CD8-positive, alpha-beta T cell (primary cell): ENCODE measurements at regions of chr6 and their contacts with region 1.

Region 1: DNA sequence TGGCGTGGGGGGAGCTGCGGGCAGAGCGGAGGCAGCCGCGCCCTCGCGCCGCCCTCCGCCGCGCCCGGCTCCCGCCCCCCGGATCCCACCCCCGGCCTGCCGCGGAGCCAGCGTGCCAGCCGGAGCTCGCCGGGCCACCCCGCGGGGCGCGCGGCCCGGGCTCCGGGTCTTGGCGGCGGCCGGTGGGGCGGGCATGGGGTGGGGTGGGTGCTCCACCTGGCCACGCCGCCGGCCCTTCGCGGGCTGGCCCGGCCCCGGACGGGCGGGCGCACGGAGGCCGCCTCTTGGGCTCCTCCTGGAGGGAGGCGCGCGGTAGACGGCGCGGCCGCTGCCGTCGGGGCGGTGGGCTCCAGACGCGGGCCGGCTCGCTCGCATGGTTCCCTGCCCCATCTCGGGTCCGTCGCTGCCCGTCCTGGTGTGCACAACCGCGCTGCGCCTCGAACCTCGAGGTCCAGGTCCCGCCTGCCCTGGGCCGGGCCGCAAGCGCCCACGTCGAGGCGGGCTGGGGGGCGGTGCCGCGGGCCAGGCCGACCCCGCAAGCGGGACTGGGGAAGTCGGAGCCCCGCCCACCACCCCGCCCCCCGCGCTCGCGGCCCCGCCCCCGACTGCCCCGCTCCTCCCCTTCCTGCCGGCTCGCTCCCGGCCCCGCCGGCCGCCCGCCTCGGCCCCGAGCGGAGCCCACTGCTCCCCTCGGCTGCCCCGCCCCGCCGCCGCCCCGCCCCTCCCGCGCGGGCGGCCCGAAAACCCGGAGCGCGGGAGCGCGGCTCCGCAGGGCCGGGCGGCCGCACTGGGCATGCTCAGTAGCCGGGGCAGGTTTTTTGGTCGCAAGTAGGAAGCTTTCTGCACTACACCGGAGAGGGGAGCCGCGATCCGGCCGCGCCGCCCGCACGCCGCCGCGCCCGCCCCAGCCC is at the start of gene CDYL:
- DNase-seq: peak; percentile 76 to 94 (median 89)
- ATAC-seq: peak; percentile 75
- H3K4me3 ChIP-seq: peak within 1 kb of the TSS; percentile 63 to 64
- H3K4me3 Mint-ChIP-seq: peak within 1 kb of the TSS; percentile 91
- H3K27ac ChIP-seq: peak within 1 kb of the TSS; percentile 29 to 38
- H3K27ac Mint-ChIP-seq: peak within 1 kb of the TSS; percentile 91
- H3K4me1 ChIP-seq: peaks cover 25% of the 10 kb centered on the region
- H3K4me1 Mint-ChIP-seq: peaks cover 44% of the 10 kb centered on the region
- H3K27me3 ChIP-seq: no peaks in the 10 kb centered on the region
- H3K27me3 Mint-ChIP-seq: no peaks in the 10 kb centered on the region
- CTCF ChIP-seq: no peak
- total RNA-seq, gene CDYL: 35.9 to 36.3 TPM

Region 2: GRCh38 chr6:2940010-2940850 is 1835.6 kb before region 1 on chr6:
- CTCF ChIA-PET with region 1: no interaction called
- POLR2A ChIA-PET with region 1: no interaction called
- intact Hi-C with region 1: loop called in 1 of 2 experiments (anchors 5 kb)
- DNase-seq: peak; percentile 52 to 91 (median 73)
- ATAC-seq: peak; percentile 70
- H3K4me3 ChIP-seq: peak overlapping the region; percentile 52 to 75
- H3K4me3 Mint-ChIP-seq: peak overlapping the region; percentile 84
- H3K27ac ChIP-seq: peak overlapping the region; percentile 73 to 84
- H3K27ac Mint-ChIP-seq: peak overlapping the region; percentile 94
- H3K4me1 ChIP-seq: peaks cover 87% of the 10 kb centered on the region
- H3K4me1 Mint-ChIP-seq: peaks cover 80% of the 10 kb centered on the region
- H3K27me3 ChIP-seq: no peaks in the 10 kb centered on the region
- H3K27me3 Mint-ChIP-seq: no peaks in the 10 kb centered on the region
- CTCF ChIP-seq: no peak

Region 3: GRCh38 chr6:4612636-4613171 is 163.1 kb before region 1 on chr6:
- CTCF ChIA-PET with region 1: no interaction called
- POLR2A ChIA-PET with region 1: no interaction called
- intact Hi-C with region 1: no loop called
- DNase-seq: no peak
- ATAC-seq: no peak
- H3K4me3 ChIP-seq: no peak overlapping the region
- H3K4me3 Mint-ChIP-seq: no peak overlapping the region
- H3K27ac ChIP-seq: no peak overlapping the region
- H3K27ac Mint-ChIP-seq: no peak overlapping the region
- H3K4me1 ChIP-seq: peaks cover 11% of the 10 kb centered on the region
- H3K4me1 Mint-ChIP-seq: peaks cover 19% of the 10 kb centered on the region
- H3K27me3 ChIP-seq: no peaks in the 10 kb centered on the region
- H3K27me3 Mint-ChIP-seq: peaks cover 9% of the 10 kb centered on the region
- CTCF ChIP-seq: no peak

Region 4: DNA sequence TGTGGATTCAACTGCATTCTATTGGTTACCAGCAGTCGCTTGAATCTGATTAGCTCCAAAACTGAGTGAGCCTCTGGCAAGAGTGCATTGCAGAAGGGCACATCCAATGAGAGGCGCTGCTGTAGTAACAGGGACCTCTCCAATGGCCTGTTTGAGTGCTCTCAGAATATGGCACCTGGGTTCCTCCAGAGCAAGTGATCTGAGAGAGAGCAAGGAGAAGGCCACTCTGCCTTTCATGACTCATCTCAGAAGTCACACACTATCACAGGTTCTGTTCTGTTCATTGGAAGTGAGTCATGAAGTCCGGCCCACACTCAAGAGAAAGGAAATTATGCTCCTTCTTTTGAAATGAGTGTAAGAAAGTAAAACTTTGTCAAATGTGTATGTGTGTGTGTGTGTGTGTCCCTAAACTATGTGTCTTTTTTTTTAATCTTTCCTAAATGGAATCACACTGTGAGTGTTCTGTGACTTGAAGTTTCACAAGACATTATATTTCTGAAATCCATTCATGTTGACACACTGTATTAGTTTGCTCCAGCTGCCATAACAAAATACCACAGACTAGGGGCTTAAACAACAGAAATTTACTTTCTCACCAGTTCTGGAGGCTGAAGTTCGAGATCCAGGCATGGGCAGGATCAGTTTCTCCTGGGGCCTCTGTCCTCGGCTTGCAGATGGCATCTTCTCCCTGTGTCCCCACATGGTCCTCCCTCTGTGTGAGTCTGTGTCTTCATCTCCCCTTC is 138.0 kb before region 1 on chr6:
- CTCF ChIA-PET with region 1: no interaction called
- POLR2A ChIA-PET with region 1: no interaction called
- intact Hi-C with region 1: no loop called
- DNase-seq: no peak
- ATAC-seq: no peak
- H3K4me3 ChIP-seq: no peak overlapping the region
- H3K4me3 Mint-ChIP-seq: no peak overlapping the region
- H3K27ac ChIP-seq: no peak overlapping the region
- H3K27ac Mint-ChIP-seq: no peak overlapping the region
- H3K4me1 ChIP-seq: no peaks in the 10 kb centered on the region
- H3K4me1 Mint-ChIP-seq: no peaks in the 10 kb centered on the region
- H3K27me3 ChIP-seq: no peaks in the 10 kb centered on the region
- H3K27me3 Mint-ChIP-seq: peaks cover 18% of the 10 kb centered on the region
- CTCF ChIP-seq: no peak

Region 5: DNA sequence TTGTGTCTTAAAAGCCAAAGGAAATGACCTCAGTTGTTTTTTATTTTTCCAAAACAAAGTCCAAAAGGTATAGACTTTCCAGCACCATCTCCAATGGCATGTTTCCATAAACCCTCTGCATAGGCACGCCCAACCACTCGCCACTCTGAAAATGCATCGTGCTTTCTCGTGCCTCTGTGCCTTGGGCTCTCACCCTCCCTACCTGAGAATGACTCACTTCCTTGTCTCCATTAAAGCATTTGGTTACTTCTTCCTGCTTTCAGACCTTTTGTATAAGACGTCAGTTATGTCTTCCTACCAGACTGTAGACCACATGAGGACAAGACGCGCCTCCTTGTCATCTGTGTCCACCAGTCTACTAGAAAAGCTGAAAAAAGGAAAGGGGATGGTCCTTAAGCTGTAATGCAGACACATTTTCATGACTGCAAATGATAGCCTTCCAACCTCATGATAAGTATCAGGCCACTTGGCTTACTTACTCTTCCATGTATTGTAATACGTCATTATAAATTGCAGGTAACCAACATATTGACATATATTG is 60.8 kb before region 1 on chr6:
- CTCF ChIA-PET with region 1: no interaction called
- POLR2A ChIA-PET with region 1: no interaction called
- intact Hi-C with region 1: no loop called
- DNase-seq: no peak
- ATAC-seq: no peak
- H3K4me3 ChIP-seq: no peak overlapping the region
- H3K4me3 Mint-ChIP-seq: no peak overlapping the region
- H3K27ac ChIP-seq: no peak overlapping the region
- H3K27ac Mint-ChIP-seq: no peak overlapping the region
- H3K4me1 ChIP-seq: no peaks in the 10 kb centered on the region
- H3K4me1 Mint-ChIP-seq: no peaks in the 10 kb centered on the region
- H3K27me3 ChIP-seq: peaks cover 0 to 3% of the 10 kb centered on the region in 2 experiments
- H3K27me3 Mint-ChIP-seq: no peaks in the 10 kb centered on the region
- CTCF ChIP-seq: no peak

Region 6: DNA sequence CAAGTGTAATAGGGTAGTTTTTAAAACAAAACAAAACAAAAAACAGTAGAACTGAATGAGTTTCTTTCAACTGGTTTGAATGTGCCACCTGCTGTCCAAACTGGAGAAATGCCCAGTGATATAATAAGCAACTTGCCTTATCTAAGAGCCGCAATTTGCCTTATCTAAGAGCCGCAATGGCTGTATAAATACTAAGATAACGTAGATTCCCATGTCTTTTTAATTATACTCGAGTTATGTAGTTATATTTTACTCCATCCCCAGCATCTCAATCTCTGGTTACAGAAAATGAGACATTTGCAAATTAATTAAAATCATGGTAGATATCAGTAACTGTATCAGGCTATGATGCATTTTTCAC is 160.8 kb after region 1 on chr6:
- CTCF ChIA-PET with region 1: no interaction called
- POLR2A ChIA-PET with region 1: no interaction called
- intact Hi-C with region 1: loop called in 1 of 2 experiments (anchors 5 kb)
- DNase-seq: peak in 2 of 9 experiments; percentile 43 to 61
- ATAC-seq: no peak
- H3K4me3 ChIP-seq: no peak overlapping the region
- H3K4me3 Mint-ChIP-seq: no peak overlapping the region
- H3K27ac ChIP-seq: no peak overlapping the region
- H3K27ac Mint-ChIP-seq: no peak overlapping the region
- H3K4me1 ChIP-seq: peaks cover 22% of the 10 kb centered on the region
- H3K4me1 Mint-ChIP-seq: peaks cover 57% of the 10 kb centered on the region
- H3K27me3 ChIP-seq: no peaks in the 10 kb centered on the region
- H3K27me3 Mint-ChIP-seq: no peaks in the 10 kb centered on the region
- CTCF ChIP-seq: peak; percentile 59

Region 7: GRCh38 chr6:4997862-4998261 is 222.0 kb after region 1 on chr6:
- CTCF ChIA-PET with region 1: no interaction called
- POLR2A ChIA-PET with region 1: interaction called, 4 read pairs
- intact Hi-C with region 1: loop called (anchors 2 kb)
- DNase-seq: no peak
- ATAC-seq: no peak
- H3K4me3 ChIP-seq: no peak overlapping the region
- H3K4me3 Mint-ChIP-seq: no peak overlapping the region
- H3K27ac ChIP-seq: no peak overlapping the region
- H3K27ac Mint-ChIP-seq: no peak overlapping the region
- H3K4me1 ChIP-seq: no peaks in the 10 kb centered on the region
- H3K4me1 Mint-ChIP-seq: peaks cover 2% of the 10 kb centered on the region
- H3K27me3 ChIP-seq: no peaks in the 10 kb centered on the region
- H3K27me3 Mint-ChIP-seq: no peaks in the 10 kb centered on the region
- CTCF ChIP-seq: no peak

Region 8: DNA sequence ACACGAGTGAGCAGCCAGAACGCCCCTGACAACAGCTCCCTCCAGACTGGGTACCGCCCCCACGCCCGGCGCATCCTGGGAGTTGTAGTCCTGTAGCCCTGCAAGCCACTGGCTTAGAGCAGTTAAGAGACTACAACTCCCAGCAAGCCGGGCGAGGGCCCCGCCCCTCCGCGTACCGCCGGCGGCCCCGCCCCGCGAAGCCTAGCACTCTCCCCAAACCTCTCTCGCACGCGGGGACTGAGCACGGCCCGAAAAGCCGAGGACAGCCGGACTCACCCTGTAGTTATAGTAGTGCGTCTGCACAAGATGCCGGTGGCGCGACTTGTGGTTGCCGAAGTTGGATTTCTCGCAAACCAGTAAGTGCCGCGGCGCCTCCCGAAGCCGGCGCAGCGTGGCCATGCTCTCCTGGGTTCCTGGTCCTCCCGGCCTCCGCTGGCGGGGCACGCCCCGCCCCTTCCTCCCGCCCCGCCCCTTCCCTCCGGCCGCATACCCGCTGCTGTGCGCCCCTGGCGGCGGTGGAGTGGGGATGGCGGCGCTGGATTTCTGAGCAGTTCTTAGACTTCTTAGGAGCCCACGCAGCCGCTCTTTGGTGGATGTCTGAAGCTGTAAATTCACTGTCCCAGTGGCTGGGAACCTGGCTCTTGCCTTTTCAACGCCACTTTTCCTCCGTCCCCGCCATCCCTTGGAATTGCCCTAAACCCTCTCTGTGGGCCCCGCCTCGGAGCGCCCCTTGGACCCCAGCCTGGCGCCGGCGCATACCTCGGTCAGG is 227.9 kb after region 1 on chr6 and contains the start of gene RPP40:
- CTCF ChIA-PET with region 1: no interaction called
- POLR2A ChIA-PET with region 1: interaction called, 4 read pairs
- intact Hi-C with region 1: loop called (anchors 1 to 2 kb)
- DNase-seq: peak; percentile 97 to 99 (median 98)
- ATAC-seq: peak; percentile 94
- H3K4me3 ChIP-seq: peak within 1 kb of the TSS; percentile 80 to 95
- H3K4me3 Mint-ChIP-seq: peak within 1 kb of the TSS; percentile 94
- H3K27ac ChIP-seq: peak within 1 kb of the TSS; percentile 79 to 82
- H3K27ac Mint-ChIP-seq: peak within 1 kb of the TSS; percentile 97
- H3K4me1 ChIP-seq: peaks cover 8% of the 10 kb centered on the region
- H3K4me1 Mint-ChIP-seq: peaks cover 13% of the 10 kb centered on the region
- H3K27me3 ChIP-seq: no peaks in the 10 kb centered on the region
- H3K27me3 Mint-ChIP-seq: no peaks in the 10 kb centered on the region
- CTCF ChIP-seq: peak; percentile 84
- total RNA-seq, gene RPP40: 0.94 to 1.2 TPM

Region 9: DNA sequence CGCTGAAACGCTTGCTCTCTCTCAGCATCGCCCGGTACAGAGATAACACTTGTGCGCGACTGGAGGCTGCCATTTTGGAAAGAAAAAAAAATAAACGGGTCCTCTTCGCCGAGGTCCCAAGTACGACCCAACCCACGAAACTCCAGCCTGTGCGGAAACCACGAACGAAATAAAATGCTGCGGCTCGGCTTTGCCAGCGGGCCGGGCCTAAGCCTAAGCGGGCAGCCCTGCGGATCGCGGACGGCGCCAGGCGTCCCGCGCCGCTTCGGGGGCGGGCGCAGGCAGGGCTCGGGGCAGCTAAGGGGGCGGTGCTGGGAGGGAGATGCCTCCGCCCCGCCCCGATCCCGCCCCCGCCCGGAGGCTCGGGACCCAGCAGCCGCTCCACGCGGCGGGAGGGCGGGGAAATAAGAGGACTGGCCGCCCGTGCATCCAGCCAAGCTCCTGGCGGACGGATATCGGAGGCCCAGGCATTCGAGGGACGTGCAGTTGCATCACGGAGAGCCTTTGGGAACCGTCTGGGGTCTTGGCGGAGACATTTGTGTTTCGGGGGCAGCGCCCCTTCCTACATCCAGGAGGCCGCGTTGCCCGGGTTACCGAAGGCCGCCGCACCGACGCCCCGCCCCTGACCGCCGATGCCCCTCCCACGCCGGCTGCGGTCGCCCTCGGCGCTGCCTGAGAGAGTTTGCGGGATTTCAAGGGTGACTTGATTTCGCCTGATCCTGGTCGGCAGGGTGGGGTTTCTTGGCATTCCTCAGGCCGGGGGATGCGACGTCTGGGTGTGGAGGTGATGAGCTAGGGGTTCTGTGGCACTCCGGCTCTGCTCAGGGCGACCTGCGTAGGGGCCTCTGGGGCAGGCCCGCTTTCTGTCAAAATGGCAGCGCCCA is 485.1 kb after region 1 on chr6 and contains the starts of genes FARS2 and LYRM4:
- CTCF ChIA-PET with region 1: no interaction called
- POLR2A ChIA-PET with region 1: no interaction called
- intact Hi-C with region 1: loop called in 1 of 2 experiments (anchors 5 kb)
- DNase-seq: peak; percentile 86 to 98 (median 92)
- ATAC-seq: peak; percentile 82
- H3K4me3 ChIP-seq: peak within 1 kb of the TSS; percentile 93
- H3K4me3 Mint-ChIP-seq: peak within 1 kb of the TSS; percentile 98
- H3K27ac ChIP-seq: peak within 1 kb of the TSS; percentile 97 to 99
- H3K27ac Mint-ChIP-seq: peak within 1 kb of the TSS; percentile 100
- H3K4me1 ChIP-seq: peaks cover 17% of the 10 kb centered on the region
- H3K4me1 Mint-ChIP-seq: peaks cover 37% of the 10 kb centered on the region
- H3K27me3 ChIP-seq: no peaks in the 10 kb centered on the region
- H3K27me3 Mint-ChIP-seq: no peaks in the 10 kb centered on the region
- CTCF ChIP-seq: no peak
- total RNA-seq, gene FARS2: 9.1 to 10.5 TPM
- total RNA-seq, gene LYRM4: 23.4 to 24.3 TPM

Region 10: DNA sequence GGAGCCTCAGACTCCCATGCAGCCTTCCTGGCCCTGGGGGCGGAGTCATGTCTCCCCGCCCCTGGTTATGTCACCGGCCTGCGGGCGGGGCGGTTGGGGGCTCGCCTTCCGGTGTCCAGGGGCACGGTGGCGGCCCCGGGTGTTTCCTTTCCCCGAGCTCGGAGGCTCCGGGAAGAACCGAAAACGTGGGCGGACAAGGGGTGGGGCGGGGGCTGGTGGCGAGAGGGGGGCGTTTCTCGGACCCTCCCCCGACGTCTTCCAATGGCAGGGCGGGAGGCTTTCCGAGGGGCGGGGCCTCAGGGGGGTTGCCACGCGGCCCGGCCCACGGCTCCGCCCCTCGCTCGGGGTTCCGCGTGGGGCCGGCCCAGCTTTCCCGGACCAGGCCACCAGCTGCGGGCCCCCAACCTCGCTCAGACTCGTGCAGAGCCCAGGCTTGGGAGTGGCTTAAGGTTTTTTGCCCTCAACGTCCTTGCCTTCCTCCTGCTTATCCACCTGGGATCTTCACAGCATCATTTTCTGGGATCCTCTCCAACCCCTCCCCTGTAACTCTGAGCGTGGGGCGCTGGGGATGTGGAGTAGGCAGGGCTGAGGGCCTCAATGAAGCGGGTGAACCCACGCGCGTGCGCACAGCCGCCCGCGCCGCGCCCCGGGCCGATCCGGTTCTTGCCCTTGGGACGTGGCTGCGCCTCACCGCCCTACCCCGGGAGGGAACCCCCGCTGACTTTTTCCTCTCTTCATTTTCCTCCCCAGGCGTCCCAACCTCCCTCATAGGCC is 1233.0 kb after region 1 on chr6:
- CTCF ChIA-PET with region 1: no interaction called
- POLR2A ChIA-PET with region 1: no interaction called
- intact Hi-C with region 1: loop called in 1 of 2 experiments (anchors 10 kb)
- DNase-seq: peak in 4 of 9 experiments; percentile 29 to 64 (median 46)
- ATAC-seq: peak; percentile 47
- H3K4me3 ChIP-seq: peak overlapping the region; percentile 44 to 47
- H3K4me3 Mint-ChIP-seq: peak overlapping the region; percentile 64
- H3K27ac ChIP-seq: no peak overlapping the region
- H3K27ac Mint-ChIP-seq: no peak overlapping the region
- H3K4me1 ChIP-seq: peaks cover 39% of the 10 kb centered on the region
- H3K4me1 Mint-ChIP-seq: peaks cover 37% of the 10 kb centered on the region
- H3K27me3 ChIP-seq: peaks cover 45 to 46% of the 10 kb centered on the region in 2 experiments
- H3K27me3 Mint-ChIP-seq: peaks cover 70% of the 10 kb centered on the region
- CTCF ChIP-seq: no peak